ENCODE measurements at regions of chr6 and their contacts with region 1.

Region 1: DNA sequence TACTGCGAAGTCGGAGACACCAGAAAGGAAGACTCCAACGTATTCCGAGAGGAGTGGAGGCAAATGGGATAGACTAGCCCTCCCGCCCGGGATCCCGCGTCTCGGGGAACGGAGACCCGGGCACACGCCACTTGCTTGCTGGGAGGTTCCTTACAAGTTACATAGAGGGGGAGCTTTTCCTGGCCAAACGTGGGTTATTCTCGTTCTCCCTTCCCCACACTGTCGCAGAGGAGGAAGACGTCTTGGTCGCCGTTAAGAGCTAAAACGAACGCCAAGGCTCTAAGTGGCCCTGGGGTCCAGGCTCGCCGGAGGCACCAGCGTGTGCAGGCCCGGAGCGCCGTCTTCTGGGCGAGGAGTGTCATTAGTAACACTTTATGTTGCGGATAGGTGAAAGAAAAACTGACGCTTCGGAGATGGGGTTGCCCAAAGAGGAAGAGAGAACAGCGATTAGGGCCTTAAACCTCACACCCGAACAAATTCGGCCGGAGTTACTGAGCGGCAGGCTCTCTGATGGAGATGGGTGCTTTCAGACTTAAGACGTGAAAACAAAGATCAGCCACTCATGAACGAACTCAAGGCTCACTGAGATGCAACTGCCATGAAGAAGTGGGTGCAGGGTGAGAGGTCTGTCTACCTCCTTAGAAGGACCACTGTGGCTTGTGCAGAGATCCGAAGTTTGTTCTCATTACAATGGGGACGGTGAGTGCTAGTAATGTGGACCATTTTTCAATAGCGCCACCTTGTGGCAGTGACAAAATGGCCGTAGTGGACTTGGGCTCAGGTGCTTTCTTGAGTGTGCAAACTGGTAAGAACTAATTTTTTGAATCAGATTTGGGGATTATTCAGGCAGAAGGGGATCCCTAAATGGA is 11.7 kb upstream of the ZNF311 start:
- DNase-seq: peak; percentile 90
- ATAC-seq: peak; percentile 87
- H3K4me3 Mint-ChIP-seq: peak overlapping the region; percentile 77
- H3K27ac Mint-ChIP-seq: peak overlapping the region; percentile 78
- H3K4me1 Mint-ChIP-seq: peaks cover 10% of the 10 kb centered on the region
- H3K27me3 Mint-ChIP-seq: peaks cover 20% of the 10 kb centered on the region

Region 2: GRCh38 chr6:28683944-28684538 is 332.8 kb before region 1 on chr6:
- CTCF ChIA-PET with region 1: interaction called, 6 read pairs
- POLR2A ChIA-PET with region 1: no interaction called
- intact Hi-C with region 1: loop called (anchors 1 to 2 kb)
- DNase-seq: peak; percentile 13
- ATAC-seq: peak; percentile 53
- H3K4me3 Mint-ChIP-seq: no peak overlapping the region
- H3K27ac Mint-ChIP-seq: no peak overlapping the region
- H3K4me1 Mint-ChIP-seq: peaks cover 6% of the 10 kb centered on the region
- H3K27me3 Mint-ChIP-seq: peaks cover 54% of the 10 kb centered on the region

Region 3: GRCh38 chr6:28895134-28895812 is 121.5 kb before region 1 on chr6:
- CTCF ChIA-PET with region 1: interaction called, 7 read pairs
- POLR2A ChIA-PET with region 1: no interaction called
- intact Hi-C with region 1: loop called (anchors 1 kb)
- DNase-seq: peak; percentile 94
- ATAC-seq: peak; percentile 82
- H3K4me3 Mint-ChIP-seq: peak overlapping the region; percentile 98
- H3K27ac Mint-ChIP-seq: peak overlapping the region; percentile 99
- H3K4me1 Mint-ChIP-seq: peaks cover 9% of the 10 kb centered on the region
- H3K27me3 Mint-ChIP-seq: no peaks in the 10 kb centered on the region

Region 4: DNA sequence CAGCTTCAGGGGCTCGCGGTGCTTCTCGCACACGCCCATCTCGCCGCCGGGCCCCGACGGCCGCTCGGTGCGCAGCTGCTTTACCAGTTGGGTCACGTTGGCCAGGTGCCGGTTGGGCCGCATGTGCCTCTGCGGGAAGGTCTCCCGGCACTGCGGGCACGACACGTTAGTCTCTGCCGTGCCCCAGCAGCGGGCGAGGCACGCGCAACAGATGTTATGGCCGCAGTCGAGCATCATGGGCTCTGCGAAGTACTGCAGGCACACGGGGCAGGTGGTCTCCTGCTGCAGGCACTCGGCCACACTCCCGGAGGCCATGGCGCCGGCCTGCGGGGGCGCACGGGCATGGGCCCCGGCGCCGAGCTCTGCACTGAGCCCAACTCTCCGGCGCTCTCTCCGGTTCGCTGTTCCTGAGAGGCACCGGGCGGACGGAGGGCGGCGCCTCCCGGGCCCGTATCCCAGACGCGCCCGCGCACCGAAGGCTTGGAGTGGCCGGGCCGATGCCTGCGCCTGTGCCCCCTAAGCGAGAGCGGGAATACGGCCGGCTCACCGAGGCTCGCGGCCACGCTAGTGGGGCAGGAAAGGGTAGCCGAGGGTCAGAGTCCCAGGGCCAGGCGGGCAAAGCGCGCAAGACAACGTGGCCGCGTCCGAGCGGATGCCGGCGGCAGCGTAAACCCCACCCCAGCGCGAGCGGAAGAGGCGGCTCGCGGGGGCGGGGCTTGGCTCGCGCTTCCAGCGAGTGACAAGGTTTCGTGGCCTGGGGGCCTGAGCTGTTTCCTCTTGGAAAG is 93.3 kb before region 1 on chr6 and contains the start of gene TRIM27:
- CTCF ChIA-PET with region 1: interaction called, 8 read pairs
- POLR2A ChIA-PET with region 1: interaction called, 3 read pairs
- intact Hi-C with region 1: loop called (anchors 1 to 2 kb)
- DNase-seq: peak; percentile 88
- ATAC-seq: peak; percentile 81
- H3K4me3 Mint-ChIP-seq: peak within 1 kb of the TSS; percentile 96
- H3K27ac Mint-ChIP-seq: peak within 1 kb of the TSS; percentile 88
- H3K4me1 Mint-ChIP-seq: peaks cover 36% of the 10 kb centered on the region
- H3K27me3 Mint-ChIP-seq: no peaks in the 10 kb centered on the region
- total RNA-seq, gene TRIM27: 48.5 to 54.6 TPM

Region 5: GRCh38 chr6:28981833-28982475 is 34.8 kb before region 1 on chr6:
- CTCF ChIA-PET with region 1: interaction called, 3 read pairs
- POLR2A ChIA-PET with region 1: no interaction called
- intact Hi-C with region 1: loop called (anchors 1 to 2 kb)
- DNase-seq: peak; percentile 82
- ATAC-seq: peak; percentile 42
- H3K4me3 Mint-ChIP-seq: peak overlapping the region; percentile 86
- H3K27ac Mint-ChIP-seq: peak overlapping the region; percentile 79
- H3K4me1 Mint-ChIP-seq: peaks cover 42% of the 10 kb centered on the region
- H3K27me3 Mint-ChIP-seq: peaks cover 47% of the 10 kb centered on the region

Region 6: GRCh38 chr6:28988536-28989311 is 28.1 kb before region 1 on chr6:
- CTCF ChIA-PET with region 1: interaction called, 6 read pairs
- POLR2A ChIA-PET with region 1: no interaction called
- intact Hi-C with region 1: loop called (anchors 2 kb)
- DNase-seq: peak; percentile 86
- ATAC-seq: peak; percentile 82
- H3K4me3 Mint-ChIP-seq: peak overlapping the region; percentile 83
- H3K27ac Mint-ChIP-seq: peak overlapping the region; percentile 69
- H3K4me1 Mint-ChIP-seq: peaks cover 24% of the 10 kb centered on the region
- H3K27me3 Mint-ChIP-seq: peaks cover 18% of the 10 kb centered on the region

Region 7: DNA sequence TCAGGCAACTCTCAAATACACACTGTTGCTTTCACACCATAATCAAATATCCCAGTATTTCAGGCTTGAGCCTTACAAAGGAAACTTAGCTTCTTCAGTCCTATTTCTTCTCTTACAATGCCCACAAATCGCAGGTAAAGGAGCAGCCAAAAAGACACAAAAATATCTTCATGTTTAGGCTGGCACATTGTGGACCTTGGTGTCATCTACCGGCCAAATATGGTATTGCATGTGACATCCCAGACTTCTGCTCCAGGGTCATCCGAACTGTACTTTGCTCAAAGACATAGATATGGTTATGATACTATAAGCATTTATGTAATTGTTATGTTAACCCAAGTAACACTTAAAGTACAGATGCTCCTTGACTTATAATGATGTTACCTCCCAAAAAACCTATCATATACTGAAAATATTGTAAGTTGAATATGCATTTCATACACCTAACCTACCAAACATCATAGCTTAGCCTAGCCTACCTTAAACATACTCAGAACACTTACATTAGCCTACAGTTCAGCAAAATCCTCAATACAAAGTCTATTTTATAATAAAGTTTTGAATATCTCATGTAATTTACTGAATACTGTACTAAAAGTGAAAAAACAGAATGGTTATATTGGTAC is 572.7 kb after region 1 on chr6:
- CTCF ChIA-PET with region 1: interaction called, 5 read pairs
- POLR2A ChIA-PET with region 1: no interaction called
- intact Hi-C with region 1: loop called in 1 of 2 experiments (anchors 1 kb)
- DNase-seq: peak; percentile 69
- ATAC-seq: peak; percentile 71
- H3K4me3 Mint-ChIP-seq: no peak overlapping the region
- H3K27ac Mint-ChIP-seq: no peak overlapping the region
- H3K4me1 Mint-ChIP-seq: no peaks in the 10 kb centered on the region
- H3K27me3 Mint-ChIP-seq: peaks cover 2% of the 10 kb centered on the region

Region 8: GRCh38 chr6:30238174-30238795 is 1221.5 kb after region 1 on chr6:
- CTCF ChIA-PET with region 1: no interaction called
- POLR2A ChIA-PET with region 1: no interaction called
- intact Hi-C with region 1: no loop called
- DNase-seq: peak; percentile 45
- ATAC-seq: peak; percentile 53
- H3K4me3 Mint-ChIP-seq: no peak overlapping the region
- H3K27ac Mint-ChIP-seq: no peak overlapping the region
- H3K4me1 Mint-ChIP-seq: no peaks in the 10 kb centered on the region
- H3K27me3 Mint-ChIP-seq: peaks cover 31% of the 10 kb centered on the region

Measured in activated CD4-positive, alpha-beta T cell treated with anti-CD3 and anti-CD28 coated beads for 36 hours (primary cell).